ENCODE measurements at regions of chr5 and their contacts with region 1.

Region 1: DNA sequence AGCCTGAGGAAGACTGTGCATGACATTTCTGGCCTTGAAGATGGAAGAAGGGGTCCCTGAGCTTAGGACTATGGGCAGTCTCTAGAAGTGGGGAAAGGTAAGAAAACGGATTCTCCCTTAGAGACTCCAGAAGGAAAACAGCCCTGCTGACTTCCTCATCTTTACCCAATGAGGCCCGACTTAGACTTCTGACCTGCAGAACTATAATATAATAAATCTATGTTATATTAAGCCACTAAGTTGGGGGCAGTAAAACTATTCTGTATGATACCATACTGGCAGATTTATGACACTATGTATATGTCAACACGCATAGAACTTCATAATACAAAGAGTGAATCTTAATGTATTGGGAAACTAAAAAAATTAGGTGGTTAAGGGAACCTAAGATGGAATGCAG is 422.0 kb downstream of the PLK2 start:
- DNase-seq: no peak
- ATAC-seq: no peak
- H3K4me3 ChIP-seq: no peak overlapping the region
- H3K27ac ChIP-seq: no peak overlapping the region
- H3K4me1 ChIP-seq: peaks cover 0 to 5% of the 10 kb centered on the region in 2 experiments; a peak in 2 of 5 replicates
- H3K27me3 ChIP-seq: no peaks in the 10 kb centered on the region
- CTCF ChIP-seq: no peak
- EP300 ChIP-seq: no peak
- POLR2A ChIP-seq: no peak
- RAD21 ChIP-seq: no peak

Region 2: DNA sequence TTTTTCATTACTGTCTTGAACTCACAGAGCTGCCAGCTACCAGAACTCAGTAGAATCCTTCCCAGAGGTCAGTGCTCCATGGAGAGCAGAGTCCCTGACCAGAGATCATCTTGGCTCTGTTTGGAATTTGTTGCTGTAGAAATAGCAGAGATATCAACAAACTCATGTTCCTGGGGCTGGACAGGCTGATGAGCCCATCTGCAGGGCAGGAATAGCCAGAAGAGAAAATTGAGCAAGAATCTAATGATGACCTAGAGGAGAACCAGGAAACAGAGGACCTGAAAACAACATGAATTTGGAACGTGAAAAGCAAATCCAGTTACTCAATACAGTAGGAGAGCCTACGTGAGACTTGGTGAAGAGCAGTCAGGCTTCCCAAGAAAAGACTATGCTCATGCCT is 15.8 kb before region 1 on chr5:
- CTCF ChIA-PET with region 1: no interaction called
- POLR2A ChIA-PET with region 1: interaction called, 5 read pairs
- in situ Hi-C with region 1: no loop called
- intact Hi-C with region 1: loop called (anchors 1 kb)
- DNase-seq: no peak
- ATAC-seq: no peak
- H3K4me3 ChIP-seq: no peak overlapping the region
- H3K27ac ChIP-seq: no peak overlapping the region
- H3K4me1 ChIP-seq: peaks cover 0 to 3% of the 10 kb centered on the region in 2 experiments; a peak in 2 of 5 replicates
- H3K27me3 ChIP-seq: no peaks in the 10 kb centered on the region
- CTCF ChIP-seq: no peak
- EP300 ChIP-seq: no peak
- POLR2A ChIP-seq: no peak
- RAD21 ChIP-seq: no peak